OCI-LY7 (cell line): ENCODE measurements at regions of chr2 and their contacts with region 1.

Region 1: GRCh38 chr2:198700319-198700718 is 757.4 kb downstream of the SATB2 start:
- DNase-seq: peak; percentile 94
- H3K4me3 ChIP-seq: peak overlapping the region; percentile 64
- H3K27ac ChIP-seq: peak overlapping the region; percentile 99
- H3K4me1 ChIP-seq: peaks cover 71% of the 10 kb centered on the region
- CTCF ChIP-seq: no peak

Region 2: GRCh38 chr2:198657512-198658121 is 42.7 kb before region 1 on chr2:
- CTCF ChIA-PET with region 1: no interaction called
- POLR2A ChIA-PET with region 1: interaction called, 4 read pairs
- intact Hi-C with region 1: loop called (anchors 2 kb)
- DNase-seq: peak; percentile 82
- H3K4me3 ChIP-seq: no peak overlapping the region
- H3K27ac ChIP-seq: no peak overlapping the region
- H3K4me1 ChIP-seq: peaks cover 19% of the 10 kb centered on the region
- CTCF ChIP-seq: peak; percentile 97

Region 3: GRCh38 chr2:198913394-198914152 is 213.3 kb after region 1 on chr2:
- CTCF ChIA-PET with region 1: no interaction called
- POLR2A ChIA-PET with region 1: interaction called, 3 read pairs
- intact Hi-C with region 1: loop called (anchors 5 kb)
- DNase-seq: peak; percentile 95
- H3K4me3 ChIP-seq: peak overlapping the region; percentile 54
- H3K27ac ChIP-seq: peak overlapping the region; percentile 88
- H3K4me1 ChIP-seq: peaks cover 60% of the 10 kb centered on the region
- CTCF ChIP-seq: no peak

Region 4: DNA sequence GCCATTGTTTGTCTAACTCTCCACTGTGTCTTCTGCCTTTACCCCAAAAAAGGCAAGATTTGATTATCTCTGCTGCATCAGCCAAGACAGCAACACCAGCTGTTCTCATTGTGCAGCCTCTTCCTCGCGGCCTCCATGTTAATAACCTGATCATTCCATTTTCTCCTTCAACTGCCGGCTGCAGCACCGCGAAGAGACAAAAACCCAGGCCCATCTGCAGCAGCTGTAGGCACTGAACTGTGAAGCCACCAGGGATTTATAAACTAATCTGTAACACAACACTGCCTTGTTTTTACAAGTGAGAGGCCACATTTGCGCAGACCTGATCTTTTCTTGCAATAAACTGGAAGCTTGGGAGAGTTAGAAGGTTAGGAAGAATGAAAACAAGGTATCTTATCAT is 609.7 kb after region 1 on chr2:
- CTCF ChIA-PET with region 1: no interaction called
- POLR2A ChIA-PET with region 1: no interaction called
- intact Hi-C with region 1: loop called (anchors 2 kb)
- DNase-seq: peak; percentile 96
- H3K4me3 ChIP-seq: peak overlapping the region; percentile 54
- H3K27ac ChIP-seq: peak overlapping the region; percentile 99
- H3K4me1 ChIP-seq: peaks cover 84% of the 10 kb centered on the region
- CTCF ChIP-seq: no peak

Region 5: GRCh38 chr2:199459286-199460016 is 759.1 kb after region 1 on chr2:
- CTCF ChIA-PET with region 1: no interaction called
- POLR2A ChIA-PET with region 1: no interaction called
- intact Hi-C with region 1: loop called (anchors 5 kb)
- DNase-seq: peak; percentile 81
- H3K4me3 ChIP-seq: peak overlapping the region; percentile 86
- H3K27ac ChIP-seq: peak overlapping the region; percentile 79
- H3K4me1 ChIP-seq: peaks cover 34% of the 10 kb centered on the region
- CTCF ChIP-seq: peak; percentile 42; the same call in 1 of the 2 replicates